ENCODE measurements at regions of chr4 and their contacts with region 1.

Region 1: DNA sequence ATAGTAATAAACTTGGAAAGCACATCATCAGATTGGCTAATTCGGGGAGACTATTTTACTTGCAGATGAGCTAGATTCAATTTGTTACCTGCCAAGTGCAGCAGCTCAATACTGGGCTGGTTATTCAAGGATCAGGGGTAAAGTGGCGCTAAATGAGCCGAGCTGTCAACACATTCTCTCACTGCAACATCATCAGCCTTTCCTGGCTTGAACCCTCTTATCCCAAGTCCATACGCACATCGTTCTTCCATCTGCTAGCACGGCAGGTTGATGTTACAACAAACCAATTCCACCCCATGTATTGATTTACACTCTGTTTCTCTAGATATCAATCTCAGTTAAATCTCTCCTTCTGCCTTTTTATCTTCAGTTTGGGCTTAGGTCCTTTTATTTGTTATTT is 2101.5 kb upstream of the AGA start:
- DNase-seq: no peak
- H3K4me3 ChIP-seq: no peak overlapping the region
- H3K27ac ChIP-seq: no peak overlapping the region
- H3K4me1 ChIP-seq: no peaks in the 10 kb centered on the region
- H3K27me3 ChIP-seq: no peaks in the 10 kb centered on the region
- CTCF ChIP-seq: no peak
- EP300 ChIP-seq: no peak
- POLR2A ChIP-seq: no peak

Region 2: GRCh38 chr4:179503976-179504375 is 39.8 kb before region 1 on chr4:
- in situ Hi-C with region 1: no loop called
- intact Hi-C with region 1: loop called (anchors 2 kb)
- DNase-seq: no peak
- H3K4me3 ChIP-seq: no peak overlapping the region
- H3K27ac ChIP-seq: no peak overlapping the region
- H3K4me1 ChIP-seq: no peaks in the 10 kb centered on the region
- H3K27me3 ChIP-seq: no peaks in the 10 kb centered on the region
- CTCF ChIP-seq: no peak
- EP300 ChIP-seq: no peak
- POLR2A ChIP-seq: no peak

Measured in transverse colon (tissue), 4 donors.